Heart right ventricle (tissue), 16 donors: ENCODE measurements at regions of chr22 and their contacts with region 1.

Region 1: GRCh38 chr22:39574779-39575551 is 4.4 kb downstream of the CACNA1I start:
- DNase-seq: no peak
- ATAC-seq: peak in 1 of 8 donors; percentile 19
- H3K4me3 ChIP-seq: no peak overlapping the region
- H3K27ac ChIP-seq: no peak overlapping the region
- H3K4me1 ChIP-seq: no peaks in the 10 kb centered on the region
- H3K27me3 ChIP-seq: peaks cover 0 to 43% (median 28%) of the 10 kb centered on the region in 7 donors
- CTCF ChIP-seq: no peak

Region 2: GRCh38 chr22:39765046-39765445 is 190.1 kb after region 1 on chr22:
- intact Hi-C with region 1: no loop called
- DNase-seq: no peak
- ATAC-seq: no peak
- H3K4me3 ChIP-seq: no peak overlapping the region
- H3K27ac ChIP-seq: no peak overlapping the region
- H3K4me1 ChIP-seq: no peaks in the 10 kb centered on the region
- H3K27me3 ChIP-seq: peaks cover 0 to 62% (median 11%) of the 10 kb centered on the region in 7 donors
- CTCF ChIP-seq: no peak

Region 3: DNA sequence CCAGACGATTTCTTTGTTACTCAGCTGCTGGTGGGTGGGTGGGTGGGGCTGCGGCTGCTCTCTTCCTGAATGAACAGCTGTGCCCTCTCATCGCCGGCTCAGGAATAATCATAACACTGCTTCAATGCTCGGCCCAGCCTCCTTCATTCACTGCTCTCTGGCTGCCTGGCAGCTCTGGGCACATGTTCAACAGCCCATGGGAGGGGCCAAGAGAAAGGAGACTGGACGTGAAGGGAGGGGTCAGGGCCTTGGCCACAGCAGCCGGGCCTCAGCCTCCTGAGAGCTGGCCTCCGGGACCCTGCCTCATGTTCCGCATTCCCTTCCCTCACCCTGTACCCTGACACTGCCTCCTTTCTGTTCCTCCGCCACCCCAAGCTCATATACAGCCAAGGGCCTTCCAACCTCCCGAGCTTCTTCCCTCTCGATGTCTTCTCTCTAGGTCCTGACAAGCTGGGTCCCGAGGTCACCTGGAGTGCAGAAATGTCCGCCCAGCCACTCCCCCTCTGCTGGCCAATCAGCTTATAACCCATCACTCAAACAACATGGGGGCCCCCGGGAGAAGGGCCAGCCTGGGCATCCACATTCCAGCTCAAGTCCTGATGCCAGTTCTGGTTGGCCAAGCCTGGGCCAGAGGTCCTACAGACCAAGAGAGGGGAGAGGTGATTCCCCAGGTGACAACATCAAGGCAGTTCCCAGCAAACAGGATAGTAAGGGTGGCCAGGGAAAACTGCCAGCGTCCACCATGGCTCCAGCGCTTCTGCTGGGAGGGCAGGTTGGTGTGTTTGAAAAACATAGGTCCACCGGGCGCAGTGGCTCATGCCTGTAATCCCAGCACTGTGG is 1982.7 kb after region 1 on chr22:
- intact Hi-C with region 1: loop called in 1 of 10 experiments (anchors 5 kb)
- DNase-seq: peak; percentile 70 to 75
- ATAC-seq: peak; percentile 33 to 67 (median 52)
- H3K4me3 ChIP-seq: peak overlapping the region in 2 of 10 donors; percentile 8 to 13
- H3K27ac ChIP-seq: peak overlapping the region in 9 of 10 donors; percentile 47 to 80 (median 73)
- H3K4me1 ChIP-seq: peaks cover 7 to 47% (median 28%) of the 10 kb centered on the region in 9 donors
- H3K27me3 ChIP-seq: peaks cover 0 to 20% (median 0%) of the 10 kb centered on the region in 7 donors
- CTCF ChIP-seq: no peak